CD4-positive, alpha-beta T cell (primary cell): ENCODE measurements at regions of chr5 and their contacts with region 1.

Region 1: DNA sequence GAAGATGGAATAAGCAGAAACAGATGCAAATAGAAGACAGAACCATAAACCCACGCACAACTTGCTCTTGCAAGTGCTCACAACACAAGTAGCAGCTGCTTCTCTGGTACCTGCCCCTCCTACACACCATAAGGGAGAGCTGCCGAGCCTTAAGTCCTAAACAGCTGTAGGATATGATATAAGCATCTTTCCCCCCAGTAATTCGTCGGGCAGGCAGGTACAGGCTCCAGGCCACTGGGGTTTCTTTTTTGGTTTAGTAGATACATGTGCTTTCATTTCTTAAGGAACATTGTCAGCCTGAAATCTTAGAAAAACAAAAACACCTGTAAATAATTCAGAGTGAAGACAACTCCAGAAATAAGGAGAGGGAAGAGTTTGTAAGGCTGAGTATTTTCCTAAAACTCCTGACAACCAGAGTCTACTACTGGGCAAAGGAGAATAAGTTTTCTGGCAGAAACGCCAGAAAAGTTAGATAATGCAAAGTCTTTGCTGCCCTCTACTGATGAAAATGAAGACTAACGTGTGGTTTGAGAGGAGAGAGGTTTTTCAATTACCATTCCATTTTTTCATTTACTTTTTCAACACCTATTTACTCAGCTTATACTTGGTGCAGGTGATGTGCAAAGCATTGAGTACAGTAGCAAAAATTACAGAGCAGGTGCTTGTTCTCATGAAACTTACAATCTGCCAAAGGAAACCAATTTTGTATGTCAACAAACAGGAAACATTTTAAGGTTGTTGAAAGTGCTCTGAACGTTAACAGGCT is 20.1 kb upstream of the TCERG1 start:
- DNase-seq: peak in 3 of 14 experiments; percentile 50 to 56 (median 52)
- ATAC-seq: peak; percentile 52
- H3K4me3 ChIP-seq: no peak overlapping the region
- H3K4me3 Mint-ChIP-seq: no peak overlapping the region
- H3K27ac ChIP-seq: no peak overlapping the region
- H3K27ac Mint-ChIP-seq: no peak overlapping the region
- H3K4me1 ChIP-seq: no peaks in the 10 kb centered on the region
- H3K4me1 Mint-ChIP-seq: peaks cover 5% of the 10 kb centered on the region
- H3K27me3 ChIP-seq: peaks cover 0 to under 1% of the 10 kb centered on the region in 2 experiments
- H3K27me3 Mint-ChIP-seq: peaks cover 33% of the 10 kb centered on the region
- CTCF ChIP-seq: peak; percentile 74

Region 2: DNA sequence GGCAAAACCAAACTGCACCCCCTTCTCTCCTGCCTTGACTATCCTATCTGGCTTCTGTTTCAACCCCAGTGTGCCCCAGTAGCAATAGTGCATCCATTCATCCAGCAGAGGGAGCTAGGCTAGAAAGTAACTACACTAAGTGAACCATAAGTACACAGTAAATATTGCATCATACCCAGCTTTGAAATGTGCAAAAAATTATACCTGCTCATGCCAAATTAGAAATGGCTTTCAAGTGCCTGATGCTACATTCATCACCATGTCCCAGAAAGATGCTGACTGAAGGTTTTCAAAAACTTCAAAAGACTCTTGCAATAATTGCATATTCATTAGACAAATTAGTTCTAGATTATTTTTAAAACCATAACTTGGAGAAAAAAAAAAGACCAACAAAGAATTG is 745.4 kb before region 1 on chr5:
- CTCF ChIA-PET with region 1: no interaction called
- POLR2A ChIA-PET with region 1: no interaction called
- intact Hi-C with region 1: loop called (anchors 5 kb)
- DNase-seq: peak in 3 of 14 experiments; percentile 30 to 46 (median 44)
- ATAC-seq: no peak
- H3K4me3 ChIP-seq: no peak overlapping the region
- H3K4me3 Mint-ChIP-seq: no peak overlapping the region
- H3K27ac ChIP-seq: no peak overlapping the region
- H3K27ac Mint-ChIP-seq: no peak overlapping the region
- H3K4me1 ChIP-seq: no peaks in the 10 kb centered on the region
- H3K4me1 Mint-ChIP-seq: no peaks in the 10 kb centered on the region
- H3K27me3 ChIP-seq: no peaks in the 10 kb centered on the region
- H3K27me3 Mint-ChIP-seq: no peaks in the 10 kb centered on the region
- CTCF ChIP-seq: no peak

Region 3: GRCh38 chr5:145936401-145937131 is 490.5 kb before region 1 on chr5 and contains the start of gene SH3RF2:
- CTCF ChIA-PET with region 1: no interaction called
- POLR2A ChIA-PET with region 1: no interaction called
- intact Hi-C with region 1: no loop called
- DNase-seq: peak in 3 of 14 experiments; percentile 2 to 26 (median 7)
- ATAC-seq: peak; percentile 26
- H3K4me3 ChIP-seq: peak within 1 kb of the TSS; percentile 33
- H3K4me3 Mint-ChIP-seq: peak within 1 kb of the TSS; percentile 40
- H3K27ac ChIP-seq: no peak within 1 kb of the TSS
- H3K27ac Mint-ChIP-seq: no peak within 1 kb of the TSS
- H3K4me1 ChIP-seq: peaks cover 2% of the 10 kb centered on the region
- H3K4me1 Mint-ChIP-seq: peaks cover 10% of the 10 kb centered on the region
- H3K27me3 ChIP-seq: peaks cover 0 to 5% of the 10 kb centered on the region in 2 experiments
- H3K27me3 Mint-ChIP-seq: peaks cover 34% of the 10 kb centered on the region
- CTCF ChIP-seq: no peak
- total RNA-seq, gene SH3RF2: 0.11 to 0.42 TPM

Region 4: GRCh38 chr5:146218168-146218567 is 208.9 kb before region 1 on chr5:
- CTCF ChIA-PET with region 1: no interaction called
- POLR2A ChIA-PET with region 1: no interaction called
- intact Hi-C with region 1: no loop called
- DNase-seq: no peak
- ATAC-seq: no peak
- H3K4me3 ChIP-seq: no peak overlapping the region
- H3K4me3 Mint-ChIP-seq: no peak overlapping the region
- H3K27ac ChIP-seq: no peak overlapping the region
- H3K27ac Mint-ChIP-seq: no peak overlapping the region
- H3K4me1 ChIP-seq: peaks cover 10% of the 10 kb centered on the region
- H3K4me1 Mint-ChIP-seq: peaks cover 44% of the 10 kb centered on the region
- H3K27me3 ChIP-seq: no peaks in the 10 kb centered on the region
- H3K27me3 Mint-ChIP-seq: no peaks in the 10 kb centered on the region
- CTCF ChIP-seq: no peak

Region 5: GRCh38 chr5:146291421-146292074 is 135.5 kb before region 1 on chr5:
- CTCF ChIA-PET with region 1: no interaction called
- POLR2A ChIA-PET with region 1: no interaction called
- intact Hi-C with region 1: loop called (anchors 1 to 2 kb)
- DNase-seq: peak in 4 of 14 experiments; percentile 14 to 68 (median 52)
- ATAC-seq: peak; percentile 63
- H3K4me3 ChIP-seq: no peak overlapping the region
- H3K4me3 Mint-ChIP-seq: no peak overlapping the region
- H3K27ac ChIP-seq: no peak overlapping the region
- H3K27ac Mint-ChIP-seq: no peak overlapping the region
- H3K4me1 ChIP-seq: no peaks in the 10 kb centered on the region
- H3K4me1 Mint-ChIP-seq: no peaks in the 10 kb centered on the region
- H3K27me3 ChIP-seq: no peaks in the 10 kb centered on the region
- H3K27me3 Mint-ChIP-seq: no peaks in the 10 kb centered on the region
- CTCF ChIP-seq: peak; percentile 80

Region 6: DNA sequence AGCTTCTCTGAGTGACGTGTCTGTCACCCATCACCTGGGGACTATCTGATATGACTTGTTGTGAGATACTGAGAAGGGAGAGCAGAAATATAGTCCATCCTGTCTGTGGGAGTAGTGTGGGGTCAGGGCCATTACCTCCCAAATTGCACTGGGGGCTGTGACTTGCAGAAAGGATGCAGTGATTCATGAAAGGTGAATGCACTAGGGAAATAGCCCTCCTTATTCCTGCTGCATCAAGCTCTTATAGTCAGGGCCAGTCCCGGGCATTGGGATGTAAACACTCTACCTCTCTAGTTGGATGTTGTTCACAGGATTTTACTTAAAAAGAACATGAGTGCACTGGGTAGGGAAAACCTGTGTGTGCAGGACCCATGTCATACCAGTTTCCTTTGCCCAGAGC is 932.5 kb after region 1 on chr5:
- CTCF ChIA-PET with region 1: no interaction called
- POLR2A ChIA-PET with region 1: no interaction called
- intact Hi-C with region 1: no loop called
- DNase-seq: no peak
- ATAC-seq: no peak
- H3K4me3 ChIP-seq: no peak overlapping the region
- H3K4me3 Mint-ChIP-seq: no peak overlapping the region
- H3K27ac ChIP-seq: no peak overlapping the region
- H3K27ac Mint-ChIP-seq: no peak overlapping the region
- H3K4me1 ChIP-seq: no peaks in the 10 kb centered on the region
- H3K4me1 Mint-ChIP-seq: no peaks in the 10 kb centered on the region
- H3K27me3 ChIP-seq: no peaks in the 10 kb centered on the region
- H3K27me3 Mint-ChIP-seq: no peaks in the 10 kb centered on the region
- CTCF ChIP-seq: no peak